A673 (cell line): ENCODE measurements at regions of chr10 and their contacts with region 1.

Region 1: GRCh38 chr10:117174439-117175214 is 22.7 kb upstream of the KCNK18 start:
- DNase-seq: peak; percentile 96
- H3K4me3 ChIP-seq: peak overlapping the region; percentile 51
- H3K27ac ChIP-seq: peak overlapping the region; percentile 65
- H3K4me1 ChIP-seq: peaks cover 15% of the 10 kb centered on the region
- H3K27me3 ChIP-seq: no peaks in the 10 kb centered on the region
- CTCF ChIP-seq: peak; percentile 93

Region 2: DNA sequence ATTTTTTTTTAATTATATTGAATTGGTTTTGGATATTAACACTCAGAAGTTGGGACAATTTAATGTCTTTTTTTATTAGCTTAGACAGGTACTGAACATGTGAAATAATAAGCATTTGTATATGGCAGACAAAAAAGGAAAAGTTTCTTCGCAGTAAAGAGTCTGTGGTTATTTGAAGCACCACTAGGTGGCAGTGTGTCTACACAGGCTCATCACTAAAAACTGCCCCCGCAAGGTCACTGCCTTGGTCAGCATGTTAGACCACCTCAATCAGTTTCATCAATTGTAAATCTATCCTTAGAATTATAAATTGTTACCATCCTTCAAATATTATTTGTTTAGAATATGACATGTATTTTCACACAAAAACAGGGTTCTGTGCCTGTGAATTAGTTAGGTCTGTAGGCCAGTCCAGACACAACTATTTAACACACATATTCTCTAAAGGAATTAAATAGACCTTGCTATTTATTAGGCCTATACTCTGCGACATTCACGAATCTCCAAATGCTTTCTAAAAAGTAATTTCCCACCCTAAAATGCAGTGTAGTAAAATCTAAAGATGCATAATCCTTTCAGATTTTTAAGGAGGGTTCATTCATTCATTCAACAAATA is 730.0 kb before region 1 on chr10:
- CTCF ChIA-PET with region 1: interaction called, 4 read pairs
- POLR2A ChIA-PET with region 1: no interaction called
- intact Hi-C with region 1: loop called (anchors 2 kb)
- DNase-seq: peak; percentile 38
- H3K4me3 ChIP-seq: no peak overlapping the region
- H3K27ac ChIP-seq: no peak overlapping the region
- H3K4me1 ChIP-seq: no peaks in the 10 kb centered on the region
- H3K27me3 ChIP-seq: peaks cover 37% of the 10 kb centered on the region
- CTCF ChIP-seq: peak; percentile 90

Region 3: GRCh38 chr10:116687633-116688032 is 487.0 kb before region 1 on chr10:
- CTCF ChIA-PET with region 1: interaction called, 16 read pairs
- POLR2A ChIA-PET with region 1: no interaction called
- intact Hi-C with region 1: loop called (anchors 1 kb)
- DNase-seq: no peak
- H3K4me3 ChIP-seq: no peak overlapping the region
- H3K27ac ChIP-seq: no peak overlapping the region
- H3K4me1 ChIP-seq: no peaks in the 10 kb centered on the region
- H3K27me3 ChIP-seq: no peaks in the 10 kb centered on the region
- CTCF ChIP-seq: no peak

Region 4: GRCh38 chr10:116787893-116788665 is 386.5 kb before region 1 on chr10:
- CTCF ChIA-PET with region 1: interaction called, 19 read pairs
- POLR2A ChIA-PET with region 1: no interaction called
- intact Hi-C with region 1: no loop called
- DNase-seq: peak; percentile 87
- H3K4me3 ChIP-seq: no peak overlapping the region
- H3K27ac ChIP-seq: no peak overlapping the region
- H3K4me1 ChIP-seq: peaks cover 5% of the 10 kb centered on the region
- H3K27me3 ChIP-seq: no peaks in the 10 kb centered on the region
- CTCF ChIP-seq: peak; percentile 99

Region 5: GRCh38 chr10:116796910-116797513 is 377.6 kb before region 1 on chr10:
- CTCF ChIA-PET with region 1: interaction called, 38 read pairs
- POLR2A ChIA-PET with region 1: no interaction called
- intact Hi-C with region 1: loop called (anchors 1 kb)
- DNase-seq: peak; percentile 93
- H3K4me3 ChIP-seq: no peak overlapping the region
- H3K27ac ChIP-seq: no peak overlapping the region
- H3K4me1 ChIP-seq: peaks cover 24% of the 10 kb centered on the region
- H3K27me3 ChIP-seq: no peaks in the 10 kb centered on the region
- CTCF ChIP-seq: peak; percentile 97

Region 6: GRCh38 chr10:116836902-116837523 is 337.6 kb before region 1 on chr10:
- CTCF ChIA-PET with region 1: interaction called, 12 read pairs
- POLR2A ChIA-PET with region 1: interaction called, 3 read pairs
- intact Hi-C with region 1: loop called (anchors 2 kb)
- DNase-seq: peak; percentile 56
- H3K4me3 ChIP-seq: no peak overlapping the region
- H3K27ac ChIP-seq: no peak overlapping the region
- H3K4me1 ChIP-seq: peaks cover 42% of the 10 kb centered on the region
- H3K27me3 ChIP-seq: no peaks in the 10 kb centered on the region
- CTCF ChIP-seq: peak; percentile 63